ENCODE measurements at regions of chr6 and their contacts with region 1.

Region 1: GRCh38 chr6:159134701-159135364 is 34.4 kb upstream of the FNDC1 start:
- DNase-seq: peak; percentile 86
- ATAC-seq: peak; percentile 94
- H3K4me3 Mint-ChIP-seq: no peak overlapping the region
- H3K27ac Mint-ChIP-seq: no peak overlapping the region
- H3K4me1 Mint-ChIP-seq: no peaks in the 10 kb centered on the region; the same call in 1 of the 2 replicates
- H3K27me3 Mint-ChIP-seq: no peaks in the 10 kb centered on the region; the same call in 1 of the 2 replicates
- CTCF ChIP-seq: peak; percentile 93

Region 2: GRCh38 chr6:158999666-159000403 is 135.0 kb before region 1 on chr6 and contains the start of gene RSPH3:
- CTCF ChIA-PET with region 1: interaction called, 29 read pairs
- POLR2A ChIA-PET with region 1: no interaction called
- DNase-seq: peak; percentile 98
- ATAC-seq: peak; percentile 91
- H3K4me3 Mint-ChIP-seq: peak within 1 kb of the TSS; percentile 95
- H3K27ac Mint-ChIP-seq: peak within 1 kb of the TSS; percentile 97
- H3K4me1 Mint-ChIP-seq: peaks cover 16% of the 10 kb centered on the region
- H3K27me3 Mint-ChIP-seq: no peaks in the 10 kb centered on the region
- CTCF ChIP-seq: no peak
- total RNA-seq, gene RSPH3: 2.4 to 3.2 TPM (median 2.7 TPM) in 3 replicates

Region 3: GRCh38 chr6:159042003-159042825 is 92.6 kb before region 1 on chr6:
- CTCF ChIA-PET with region 1: interaction called, 92 read pairs
- POLR2A ChIA-PET with region 1: no interaction called
- DNase-seq: peak; percentile 81
- ATAC-seq: peak; percentile 91
- H3K4me3 Mint-ChIP-seq: peak overlapping the region; percentile 46
- H3K27ac Mint-ChIP-seq: peak overlapping the region; percentile 92
- H3K4me1 Mint-ChIP-seq: peaks cover 29% of the 10 kb centered on the region
- H3K27me3 Mint-ChIP-seq: no peaks in the 10 kb centered on the region; the same call in 1 of the 2 replicates
- CTCF ChIP-seq: peak; percentile 81

Region 4: DNA sequence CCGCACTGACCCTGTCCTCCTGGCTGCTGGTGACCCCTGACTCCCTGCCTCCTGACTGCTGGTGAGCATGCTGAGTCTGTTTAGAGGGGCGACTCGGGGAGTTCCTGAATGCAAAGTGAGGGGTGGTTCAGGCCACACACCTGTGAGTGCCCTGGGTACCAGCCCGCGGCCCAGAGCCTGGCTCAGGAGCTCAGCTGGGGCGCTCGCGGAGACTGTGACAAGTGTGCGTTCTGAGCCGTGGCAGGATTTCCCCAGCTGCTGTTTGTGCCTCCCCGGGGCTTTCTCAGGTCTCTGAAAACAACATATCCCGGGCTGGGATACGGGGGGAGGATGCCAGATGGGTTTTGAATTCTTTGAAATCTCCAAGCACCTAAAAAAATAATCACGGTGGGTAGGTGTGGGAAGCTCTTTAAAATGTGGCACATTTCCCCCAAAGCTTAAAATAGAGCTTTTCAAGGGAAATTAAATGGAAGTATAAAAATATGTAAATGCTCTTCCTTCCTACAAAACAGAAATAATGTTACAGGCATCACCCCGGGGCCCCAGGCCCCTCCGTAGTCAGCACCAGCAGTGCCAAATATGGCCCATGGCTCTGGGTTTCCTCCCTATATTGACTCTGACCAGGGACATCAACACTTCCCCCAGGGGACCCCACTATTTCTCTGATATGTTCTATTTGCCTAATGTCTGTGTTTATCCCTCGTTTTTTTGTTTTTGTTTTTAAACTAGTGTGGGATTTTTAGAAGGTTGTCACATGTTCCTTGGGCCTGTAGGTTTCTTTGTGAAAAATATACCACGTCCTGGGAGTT is 40.2 kb before region 1 on chr6:
- CTCF ChIA-PET with region 1: interaction called, 15 read pairs
- POLR2A ChIA-PET with region 1: no interaction called
- DNase-seq: no peak
- ATAC-seq: no peak; the same call in 1 of the 2 replicates
- H3K4me3 Mint-ChIP-seq: no peak overlapping the region
- H3K27ac Mint-ChIP-seq: no peak overlapping the region
- H3K4me1 Mint-ChIP-seq: peaks cover 2% of the 10 kb centered on the region; the same call in 1 of the 2 replicates
- H3K27me3 Mint-ChIP-seq: no peaks in the 10 kb centered on the region
- CTCF ChIP-seq: no peak

Region 5: GRCh38 chr6:159110013-159110412 is 24.8 kb before region 1 on chr6:
- CTCF ChIA-PET with region 1: interaction called, 48 read pairs
- POLR2A ChIA-PET with region 1: no interaction called
- DNase-seq: peak; percentile 63
- ATAC-seq: peak; percentile 76
- H3K4me3 Mint-ChIP-seq: no peak overlapping the region
- H3K27ac Mint-ChIP-seq: no peak overlapping the region
- H3K4me1 Mint-ChIP-seq: peaks cover 18% of the 10 kb centered on the region
- H3K27me3 Mint-ChIP-seq: no peaks in the 10 kb centered on the region
- CTCF ChIP-seq: peak; percentile 89

Region 6: DNA sequence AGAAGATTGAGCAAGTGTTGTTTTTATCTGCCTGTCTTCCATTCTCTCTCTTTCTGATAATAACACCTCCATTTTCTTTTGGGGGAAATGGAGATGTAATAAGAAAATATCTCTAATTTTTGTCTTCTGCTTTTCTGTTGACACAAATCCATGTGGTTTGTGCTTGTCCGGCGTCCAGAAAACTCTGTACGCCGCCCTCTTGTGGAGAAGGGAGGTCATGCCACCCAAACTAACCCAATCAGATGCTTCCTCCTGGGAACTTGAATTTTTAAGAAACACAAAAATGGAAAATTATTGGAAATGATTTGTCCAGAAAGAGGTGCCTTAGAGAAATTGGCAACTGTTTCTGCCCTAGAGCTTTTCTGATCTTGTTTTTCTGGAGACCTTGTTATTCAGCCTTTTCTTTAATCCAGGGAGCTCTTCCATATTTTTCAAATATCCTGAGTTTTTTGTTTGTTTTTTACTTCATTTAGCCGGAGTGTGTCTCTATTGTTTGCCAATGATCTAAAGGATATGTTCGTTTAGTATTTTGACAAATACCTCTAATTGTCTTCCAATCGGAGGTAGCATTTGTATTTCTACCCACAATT is 16.5 kb after region 1 on chr6:
- CTCF ChIA-PET with region 1: interaction called, 31 read pairs
- POLR2A ChIA-PET with region 1: no interaction called
- DNase-seq: peak; percentile 48
- ATAC-seq: peak; percentile 43; the same call in 1 of the 2 replicates
- H3K4me3 Mint-ChIP-seq: no peak overlapping the region
- H3K27ac Mint-ChIP-seq: no peak overlapping the region
- H3K4me1 Mint-ChIP-seq: no peaks in the 10 kb centered on the region
- H3K27me3 Mint-ChIP-seq: peaks cover 6% of the 10 kb centered on the region; the same call in 1 of the 2 replicates
- CTCF ChIP-seq: peak; percentile 65